ENCODE measurements at regions of chr20 and their contacts with region 1.

Region 1: DNA sequence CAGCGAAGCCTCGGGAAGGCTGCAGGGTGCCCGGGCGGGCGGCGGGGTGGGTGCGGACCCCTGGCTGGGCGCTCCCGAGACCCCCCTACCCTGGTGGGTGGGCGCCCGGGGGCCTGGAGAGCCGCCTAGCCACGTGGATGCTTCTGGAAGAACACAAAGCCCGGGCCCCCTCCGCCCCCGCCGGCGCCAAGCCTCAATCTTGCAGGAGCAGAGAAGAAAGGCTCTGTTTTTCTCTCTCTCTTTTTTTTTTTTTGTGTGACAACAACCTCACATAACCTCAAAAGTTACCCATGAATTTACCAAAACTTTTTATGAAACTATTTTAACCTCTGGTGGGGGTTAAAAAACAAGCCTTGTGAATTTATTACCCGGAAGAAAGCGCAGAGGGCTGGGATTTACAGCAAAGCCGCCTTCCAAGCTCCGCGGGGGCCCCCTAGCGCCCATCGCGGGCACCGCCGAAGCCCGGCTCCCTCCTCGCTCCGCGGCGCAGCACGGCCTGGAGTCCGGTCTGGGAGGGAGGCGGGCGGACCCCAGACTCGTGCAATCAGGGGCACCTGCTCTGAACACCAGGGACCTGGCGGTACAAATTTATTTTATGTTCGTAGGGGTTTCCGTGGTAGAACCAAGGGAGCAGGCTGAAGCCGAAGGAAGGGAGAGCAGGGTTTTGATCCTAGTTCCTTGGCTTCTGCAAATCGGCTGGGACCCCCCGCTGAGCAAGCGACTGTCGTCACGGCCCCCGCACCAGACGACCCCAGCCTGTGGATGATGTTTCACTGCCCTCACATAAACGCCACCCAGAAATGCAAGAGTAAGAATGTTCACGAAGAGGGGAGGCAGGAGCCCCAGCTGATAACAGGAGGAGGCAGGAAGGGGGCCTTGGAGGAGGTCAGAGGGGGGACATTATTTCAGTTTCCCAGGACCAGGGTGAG is 58.9 kb downstream of the ZNF831 start:
- DNase-seq: peak; percentile 67 to 86 (median 81)
- ATAC-seq: peak; percentile 91 to 95
- H3K4me3 Mint-ChIP-seq: peak overlapping the region; percentile 75 to 91 (median 86)
- H3K27ac Mint-ChIP-seq: peak overlapping the region; percentile 81 to 94 (median 92)
- H3K4me1 Mint-ChIP-seq: peaks cover 5 to 29% (median 25%) of the 10 kb centered on the region in 4 donors
- H3K27me3 Mint-ChIP-seq: no peaks in the 10 kb centered on the region

Region 2: GRCh38 chr20:59253779-59254319 is 31.3 kb after region 1 on chr20:
- POLR2A ChIA-PET with region 1: interaction called, 10 read pairs
- DNase-seq: peak in 9 of 10 donors; percentile 6 to 63 (median 31)
- ATAC-seq: peak; percentile 53 to 58
- H3K4me3 Mint-ChIP-seq: peak overlapping the region; percentile 38 to 84 (median 73)
- H3K27ac Mint-ChIP-seq: peak overlapping the region; percentile 82 to 97 (median 93)
- H3K4me1 Mint-ChIP-seq: peaks cover 40 to 71% (median 60%) of the 10 kb centered on the region in 4 donors
- H3K27me3 Mint-ChIP-seq: no peaks in the 10 kb centered on the region

Measured in naive thymus-derived CD8-positive, alpha-beta T cell (primary cell).